ENCODE measurements at regions of chr10 and their contacts with region 1.

Region 1: GRCh38 chr10:114103284-114103683 is 59.6 kb downstream of the ADRB1 start:
- DNase-seq: peak; percentile 59
- H3K4me3 ChIP-seq: no peak overlapping the region
- H3K27ac ChIP-seq: no peak overlapping the region
- H3K4me1 ChIP-seq: peaks cover 9% of the 10 kb centered on the region
- H3K27me3 ChIP-seq: peaks cover 0 to 3% of the 10 kb centered on the region in 2 experiments
- CTCF ChIP-seq: peak; percentile 32
- POLR2A ChIP-seq: no peak

Region 2: GRCh38 chr10:113678690-113679462 is 424.4 kb before region 1 on chr10:
- CTCF ChIA-PET with region 1: interaction called, 9 read pairs
- POLR2A ChIA-PET with region 1: no interaction called
- dilution Hi-C with region 1: no loop called
- intact Hi-C with region 1: loop called (anchors 1 kb)
- DNase-seq: peak; percentile 87
- H3K4me3 ChIP-seq: peak overlapping the region; percentile 77 to 82 (median 78)
- H3K27ac ChIP-seq: peak overlapping the region; percentile 90
- H3K4me1 ChIP-seq: peaks cover 11% of the 10 kb centered on the region
- H3K27me3 ChIP-seq: no peaks in the 10 kb centered on the region
- CTCF ChIP-seq: peak; percentile 73 to 81
- POLR2A ChIP-seq: no peak

Region 3: DNA sequence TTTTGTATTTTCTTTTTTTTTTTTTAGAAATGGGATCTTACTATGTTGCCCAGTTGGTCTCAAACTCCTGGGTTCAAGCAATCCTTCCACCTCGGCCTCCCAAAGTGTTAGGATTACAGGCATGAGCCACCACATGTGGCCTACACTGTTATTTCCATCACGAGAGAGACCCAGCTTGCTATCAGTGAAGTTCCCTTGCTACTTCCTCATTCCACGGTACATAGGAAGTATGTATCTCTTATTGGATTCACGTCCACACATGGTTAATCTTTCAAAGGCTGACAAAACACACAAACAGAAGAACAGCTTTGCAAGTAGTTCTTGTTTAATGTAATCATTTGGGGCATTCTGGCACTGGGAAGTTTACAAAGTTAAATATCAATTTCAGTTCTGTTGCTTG is 300.3 kb before region 1 on chr10:
- CTCF ChIA-PET with region 1: interaction called, 210 read pairs
- POLR2A ChIA-PET with region 1: no interaction called
- dilution Hi-C with region 1: no loop called
- intact Hi-C with region 1: loop called (anchors 1 kb)
- DNase-seq: no peak
- H3K4me3 ChIP-seq: no peak overlapping the region
- H3K27ac ChIP-seq: no peak overlapping the region
- H3K4me1 ChIP-seq: no peaks in the 10 kb centered on the region
- H3K27me3 ChIP-seq: peaks cover 6 to 9% of the 10 kb centered on the region in 2 experiments
- CTCF ChIP-seq: no peak
- POLR2A ChIP-seq: no peak

Region 4: DNA sequence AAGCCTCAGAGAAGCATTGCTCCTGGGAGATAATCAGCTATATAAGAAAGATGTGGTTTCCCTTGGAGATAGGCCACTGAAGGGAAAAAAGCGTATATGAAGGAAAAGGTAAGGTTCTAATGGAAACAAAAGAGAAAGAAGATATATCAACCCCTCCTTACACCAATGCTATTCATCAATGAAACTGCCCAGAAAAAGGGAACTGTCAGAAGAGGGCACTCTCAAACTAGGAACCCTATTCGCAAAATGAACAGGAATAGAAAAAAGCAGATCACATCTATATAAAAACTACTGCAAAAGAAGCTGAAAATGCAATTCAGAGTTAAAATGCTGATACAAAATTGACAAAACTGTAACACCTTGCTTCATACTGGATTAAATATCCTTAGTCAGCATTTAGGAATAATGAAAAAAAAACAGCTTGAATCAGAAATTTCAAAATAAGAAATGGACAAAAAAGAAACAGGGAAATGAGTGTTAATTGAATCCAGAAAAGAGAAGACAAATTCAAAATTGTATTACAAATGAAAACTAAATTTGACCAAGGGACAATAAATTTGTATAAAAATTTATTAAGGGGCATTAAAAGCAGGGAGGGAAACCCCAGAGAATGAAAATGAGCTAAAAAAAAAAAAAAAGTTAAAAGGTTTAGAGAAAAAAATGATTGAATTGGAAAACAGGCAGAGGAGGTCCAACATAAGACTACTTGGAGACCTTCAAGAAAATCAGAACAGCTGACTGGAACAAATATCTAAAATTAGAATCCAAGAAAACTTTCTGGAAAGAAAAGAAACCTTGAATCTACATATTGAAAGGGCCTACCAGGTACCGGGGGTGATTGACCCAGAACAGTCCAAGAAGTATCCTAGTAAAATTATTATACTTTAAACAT is 230.9 kb before region 1 on chr10:
- CTCF ChIA-PET with region 1: interaction called, 7 read pairs
- POLR2A ChIA-PET with region 1: no interaction called
- dilution Hi-C with region 1: no loop called
- intact Hi-C with region 1: loop called (anchors 5 kb)
- DNase-seq: no peak
- H3K4me3 ChIP-seq: no peak overlapping the region
- H3K27ac ChIP-seq: no peak overlapping the region
- H3K4me1 ChIP-seq: peaks cover 14% of the 10 kb centered on the region
- H3K27me3 ChIP-seq: no peaks in the 10 kb centered on the region
- CTCF ChIP-seq: no peak
- POLR2A ChIP-seq: no peak

Region 5: DNA sequence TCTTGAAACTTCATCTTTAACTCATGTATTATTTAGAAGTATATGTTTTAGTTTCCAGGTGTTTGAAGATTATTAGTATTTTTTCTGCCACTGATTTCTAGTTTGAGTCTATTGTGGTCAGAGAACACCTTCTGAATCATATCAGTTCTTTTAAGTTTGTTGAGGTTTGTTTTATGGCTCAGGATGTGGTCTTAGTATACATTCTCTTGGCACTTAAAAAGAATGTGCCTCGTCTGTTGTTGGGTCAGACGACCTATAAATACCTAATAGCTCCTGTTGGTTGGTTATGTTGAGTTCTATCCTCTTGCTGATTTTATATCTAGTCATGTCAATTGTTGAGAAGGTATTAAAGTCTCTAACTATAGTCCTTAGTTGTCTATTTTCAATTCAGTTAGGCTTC is 91.8 kb after region 1 on chr10:
- CTCF ChIA-PET with region 1: no interaction called
- POLR2A ChIA-PET with region 1: interaction called, 11 read pairs
- dilution Hi-C with region 1: no loop called
- intact Hi-C with region 1: no loop called
- DNase-seq: no peak
- H3K4me3 ChIP-seq: no peak overlapping the region
- H3K27ac ChIP-seq: no peak overlapping the region
- H3K4me1 ChIP-seq: no peaks in the 10 kb centered on the region
- H3K27me3 ChIP-seq: no peaks in the 10 kb centered on the region
- CTCF ChIP-seq: no peak
- POLR2A ChIP-seq: no peak

Measured in endothelial cell of umbilical vein (primary cell).